ENCODE measurements at regions of chr7 and their contacts with region 1.

Region 1: GRCh38 chr7:106176414-106177299 is 64.5 kb upstream of the SYPL1 start:
- DNase-seq: no peak
- ATAC-seq: peak; percentile 76
- H3K4me3 ChIP-seq: no peak overlapping the region
- H3K27ac ChIP-seq: no peak overlapping the region
- H3K4me1 ChIP-seq: peaks cover 12% of the 10 kb centered on the region
- H3K27me3 ChIP-seq: no peaks in the 10 kb centered on the region
- CTCF ChIP-seq: peak; percentile 95 to 98 (median 96)
- EP300 ChIP-seq: no peak
- POLR2A ChIP-seq: no peak
- RAD21 ChIP-seq: peak; percentile 96

Region 2: DNA sequence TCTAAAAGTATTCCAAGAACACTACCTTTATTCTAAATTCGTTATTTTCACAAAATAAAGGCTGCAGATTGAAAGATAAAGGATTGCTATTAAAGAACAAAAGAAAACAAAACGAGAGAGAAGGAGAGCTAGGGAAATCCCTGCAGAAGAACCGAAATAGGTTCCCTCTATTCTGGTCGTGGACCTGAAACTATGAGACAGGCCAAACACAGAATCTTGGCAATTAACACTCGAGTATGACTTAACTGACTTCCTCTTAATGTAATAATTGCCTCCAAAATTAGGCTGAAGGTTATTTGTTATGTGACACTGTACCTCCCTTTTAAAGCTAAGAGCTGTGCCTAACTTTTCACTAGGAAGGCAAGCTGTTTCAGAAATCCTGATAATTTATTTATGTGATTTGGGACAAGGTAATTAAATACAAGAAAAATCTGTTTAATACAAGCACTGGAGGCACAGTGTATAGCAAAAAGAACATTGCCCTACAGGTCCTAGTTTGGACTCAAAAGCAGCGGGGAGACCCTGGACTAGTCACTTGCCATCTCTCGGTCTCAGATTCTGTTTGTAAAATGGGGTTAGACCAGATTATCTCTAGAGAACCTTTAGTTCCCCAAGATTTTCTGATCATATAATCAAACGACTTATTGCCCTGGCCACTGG is 96.5 kb after region 1 on chr7:
- CTCF ChIA-PET with region 1: interaction called, 17 read pairs
- POLR2A ChIA-PET with region 1: no interaction called
- RAD21 ChIA-PET with region 1: interaction called, 21 read pairs
- SMC1A ChIA-PET with region 1: interaction called, 43 read pairs
- in situ Hi-C with region 1: no loop called
- intact Hi-C with region 1: no loop called
- DNase-seq: peak; percentile 50
- ATAC-seq: peak; percentile 74
- H3K4me3 ChIP-seq: peak overlapping the region; percentile 28; the same call in 1 of the 2 replicates
- H3K27ac ChIP-seq: no peak overlapping the region
- H3K4me1 ChIP-seq: peaks cover 13% of the 10 kb centered on the region; the same call in 1 of the 2 replicates
- H3K27me3 ChIP-seq: no peaks in the 10 kb centered on the region
- CTCF ChIP-seq: no peak
- EP300 ChIP-seq: peak; percentile 38 to 45; a peak in 2 of 4 replicates
- POLR2A ChIP-seq: no peak
- RAD21 ChIP-seq: no peak

Region 3: DNA sequence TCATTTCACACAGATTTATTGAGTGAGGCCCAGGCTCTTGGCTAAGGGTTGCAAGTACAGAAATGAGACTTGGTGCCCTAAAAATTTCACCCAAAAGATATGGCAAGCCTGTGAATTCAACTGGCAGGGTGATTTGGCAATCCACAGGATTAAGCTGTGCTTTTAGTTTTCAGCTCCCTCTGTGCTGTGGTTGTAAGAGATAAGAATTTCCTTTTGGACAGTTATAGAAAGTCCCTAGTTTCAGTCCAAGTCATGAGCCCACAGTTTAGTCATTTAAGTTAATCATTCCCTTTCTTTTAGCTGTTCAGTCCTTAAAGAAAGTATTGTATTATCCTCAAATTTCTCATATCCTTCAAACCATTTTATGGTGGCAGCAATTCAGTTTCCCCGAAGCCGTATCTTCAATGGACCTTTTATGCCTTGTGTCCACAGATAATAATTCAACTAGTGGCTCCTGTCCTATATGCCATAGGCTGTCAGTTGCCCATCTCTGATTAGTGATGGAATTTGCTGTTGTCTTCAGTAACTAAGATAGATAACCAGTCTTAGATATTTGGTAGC is 181.5 kb after region 1 on chr7:
- CTCF ChIA-PET with region 1: interaction called, 113 read pairs
- POLR2A ChIA-PET with region 1: no interaction called
- RAD21 ChIA-PET with region 1: interaction called, 82 read pairs
- SMC1A ChIA-PET with region 1: interaction called, 35 read pairs
- in situ Hi-C with region 1: no loop called
- intact Hi-C with region 1: no loop called
- DNase-seq: no peak
- ATAC-seq: peak; percentile 95
- H3K4me3 ChIP-seq: no peak overlapping the region
- H3K27ac ChIP-seq: peak overlapping the region; percentile 31; the same call in 1 of the 2 replicates
- H3K4me1 ChIP-seq: no peaks in the 10 kb centered on the region; the same call in 1 of the 2 replicates
- H3K27me3 ChIP-seq: no peaks in the 10 kb centered on the region
- CTCF ChIP-seq: no peak
- EP300 ChIP-seq: peak in 1 of 2 experiments; percentile 67; a peak in 1 of 4 replicates
- POLR2A ChIP-seq: no peak
- RAD21 ChIP-seq: no peak

Region 4: GRCh38 chr7:106456339-106456738 is 279.7 kb after region 1 on chr7:
- CTCF ChIA-PET with region 1: interaction called, 530 read pairs
- POLR2A ChIA-PET with region 1: no interaction called
- RAD21 ChIA-PET with region 1: interaction called, 311 read pairs
- SMC1A ChIA-PET with region 1: interaction called, 390 read pairs
- in situ Hi-C with region 1: loop called (anchors 5 kb)
- intact Hi-C with region 1: no loop called
- DNase-seq: no peak
- ATAC-seq: no peak
- H3K4me3 ChIP-seq: no peak overlapping the region
- H3K27ac ChIP-seq: no peak overlapping the region
- H3K4me1 ChIP-seq: no peaks in the 10 kb centered on the region
- H3K27me3 ChIP-seq: no peaks in the 10 kb centered on the region
- CTCF ChIP-seq: no peak
- EP300 ChIP-seq: no peak
- POLR2A ChIP-seq: no peak
- RAD21 ChIP-seq: no peak

Region 5: DNA sequence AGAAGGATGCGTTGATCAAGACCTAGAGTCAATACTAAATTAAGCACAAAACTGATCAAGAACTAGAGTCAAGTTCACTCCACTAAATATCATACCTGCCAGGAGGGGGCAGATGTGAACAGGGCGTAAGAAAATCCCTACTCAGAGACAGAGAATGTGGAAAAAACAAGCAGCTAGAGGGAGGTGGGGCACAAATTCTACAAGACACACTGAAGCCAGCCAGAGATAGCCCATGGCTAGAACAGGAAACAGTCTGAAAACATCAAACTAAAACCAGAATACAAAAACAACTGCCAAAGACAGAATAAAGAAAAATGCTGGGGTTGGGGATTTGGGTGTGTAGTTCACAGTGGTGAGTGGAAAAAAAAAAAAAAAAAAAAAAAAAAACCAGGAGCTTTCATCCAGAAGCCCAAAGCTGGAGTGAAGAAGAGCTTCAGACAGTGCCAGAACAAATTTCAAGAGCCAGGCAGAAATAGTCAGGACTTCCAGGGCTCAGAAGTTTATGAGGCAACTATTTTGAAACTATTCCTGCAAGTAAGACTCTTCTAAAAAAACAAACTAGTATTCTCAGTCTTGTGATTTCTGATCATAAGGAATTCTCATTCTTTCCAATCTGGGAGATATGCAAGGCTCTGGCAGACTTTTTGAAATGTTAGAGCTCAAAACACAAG is 366.0 kb after region 1 on chr7:
- CTCF ChIA-PET with region 1: interaction called, 13 read pairs
- POLR2A ChIA-PET with region 1: interaction called, 3 read pairs
- RAD21 ChIA-PET with region 1: interaction called, 26 read pairs
- SMC1A ChIA-PET with region 1: interaction called, 14 read pairs
- in situ Hi-C with region 1: no loop called
- intact Hi-C with region 1: loop called (anchors 2 kb)
- DNase-seq: peak; percentile 57
- ATAC-seq: peak; percentile 95
- H3K4me3 ChIP-seq: no peak overlapping the region
- H3K27ac ChIP-seq: no peak overlapping the region
- H3K4me1 ChIP-seq: no peaks in the 10 kb centered on the region; the same call in 1 of the 2 replicates
- H3K27me3 ChIP-seq: no peaks in the 10 kb centered on the region
- CTCF ChIP-seq: peak; percentile 70 to 77 (median 74)
- EP300 ChIP-seq: no peak
- POLR2A ChIP-seq: no peak
- RAD21 ChIP-seq: peak; percentile 94

Region 6: GRCh38 chr7:107150375-107151073 is 973.9 kb after region 1 on chr7:
- CTCF ChIA-PET with region 1: no interaction called
- POLR2A ChIA-PET with region 1: no interaction called
- RAD21 ChIA-PET with region 1: no interaction called
- SMC1A ChIA-PET with region 1: interaction called, 4 read pairs
- in situ Hi-C with region 1: no loop called
- intact Hi-C with region 1: loop called (anchors 10 kb)
- DNase-seq: no peak
- ATAC-seq: peak; percentile 85
- H3K4me3 ChIP-seq: no peak overlapping the region
- H3K27ac ChIP-seq: no peak overlapping the region
- H3K4me1 ChIP-seq: no peaks in the 10 kb centered on the region
- H3K27me3 ChIP-seq: no peaks in the 10 kb centered on the region; a peak in 2 of 4 replicates
- CTCF ChIP-seq: peak; percentile 45 to 59 (median 47); a peak in 5 of 6 replicates
- EP300 ChIP-seq: no peak
- POLR2A ChIP-seq: no peak
- RAD21 ChIP-seq: peak; percentile 69

Measured in GM12878 (cell line).